Uterus (tissue), 4 donors: ENCODE measurements at regions of chr5 and their contacts with region 1.

Region 1: DNA sequence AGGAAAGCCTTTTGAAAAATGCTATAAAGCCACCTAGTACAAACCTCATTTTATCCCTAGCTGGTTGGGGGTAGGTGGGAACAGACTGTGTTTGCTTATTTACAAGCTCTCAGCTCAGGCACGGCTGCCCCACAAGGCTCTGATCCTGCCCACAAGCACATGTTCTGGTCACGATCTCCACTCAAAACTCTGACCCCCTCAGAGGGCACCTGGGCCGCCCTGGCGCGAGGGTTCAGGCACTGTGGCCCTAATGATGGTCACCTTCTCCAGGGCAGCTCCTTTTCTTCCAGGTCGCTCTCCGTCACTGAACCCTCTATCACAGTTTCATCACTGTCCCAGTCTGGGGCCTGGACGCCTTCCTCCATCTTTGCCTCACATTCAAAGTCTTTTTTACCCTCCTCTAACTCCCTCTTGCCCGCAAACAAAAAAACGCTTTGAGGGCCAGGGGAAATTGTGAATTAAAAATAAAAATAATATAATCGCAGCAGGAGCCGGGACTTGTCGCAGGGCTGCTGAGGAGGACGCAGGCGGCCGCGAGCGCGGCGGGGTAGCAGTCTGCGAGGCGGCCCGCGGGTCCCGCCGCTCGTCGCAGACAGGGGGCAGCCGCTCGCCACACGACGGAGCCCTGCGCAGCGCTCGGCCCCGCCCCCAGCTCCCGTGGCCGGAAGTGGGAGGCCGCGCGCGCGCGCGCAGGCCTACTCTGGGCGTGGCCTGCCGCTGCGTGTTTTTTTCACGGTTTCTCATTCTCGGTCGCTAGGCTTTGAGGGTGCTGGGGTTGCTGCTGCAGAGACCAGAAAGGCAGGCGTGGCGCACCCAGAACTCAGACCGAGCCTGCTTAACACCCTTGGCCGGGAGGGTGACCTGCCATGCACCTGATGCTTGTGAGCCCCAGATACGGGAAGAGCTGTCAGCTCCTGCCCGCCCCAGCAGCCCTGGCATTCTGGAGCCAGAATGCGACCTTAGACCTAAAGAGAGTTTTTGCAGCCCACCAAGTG is at the start of gene ANKRD31:
- DNase-seq: peak; percentile 80 to 86
- H3K4me3 ChIP-seq: peak within 1 kb of the TSS; percentile 55 to 66
- H3K27ac ChIP-seq: peak within 1 kb of the TSS; percentile 70 to 76
- H3K4me1 ChIP-seq: no peaks in the 10 kb centered on the region
- H3K27me3 ChIP-seq: no peaks in the 10 kb centered on the region
- CTCF ChIP-seq: peak; percentile 68 to 98 (median 94)
- POLR2A ChIP-seq: peak; percentile 54 to 67
- total RNA-seq, gene ANKRD31: 0.67 to 0.69 TPM in 2 of 4 donors, not detected in the others

Region 2: DNA sequence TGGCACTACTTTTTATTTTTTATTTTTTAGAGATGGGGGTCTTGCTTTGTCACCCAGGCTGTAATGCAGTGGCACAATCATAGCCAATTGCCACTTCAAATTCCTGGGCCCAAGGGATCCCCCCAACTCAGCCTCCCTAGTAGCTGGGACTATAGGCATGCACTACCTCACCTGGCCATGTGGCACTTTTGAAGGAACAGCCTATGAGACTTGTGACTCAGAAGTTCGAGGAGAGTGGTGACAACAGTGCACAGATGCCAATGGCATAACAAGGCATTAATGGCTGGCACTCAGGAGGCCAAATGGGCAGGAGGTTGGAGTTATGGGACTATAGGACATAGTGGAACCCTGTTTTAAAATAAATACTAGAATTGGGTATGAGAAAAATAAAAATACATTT is 33.7 kb before region 1 on chr5:
- intact Hi-C with region 1: no loop called
- DNase-seq: no peak
- H3K4me3 ChIP-seq: no peak overlapping the region
- H3K27ac ChIP-seq: no peak overlapping the region
- H3K4me1 ChIP-seq: no peaks in the 10 kb centered on the region
- H3K27me3 ChIP-seq: no peaks in the 10 kb centered on the region
- CTCF ChIP-seq: no peak
- POLR2A ChIP-seq: no peak

Region 3: DNA sequence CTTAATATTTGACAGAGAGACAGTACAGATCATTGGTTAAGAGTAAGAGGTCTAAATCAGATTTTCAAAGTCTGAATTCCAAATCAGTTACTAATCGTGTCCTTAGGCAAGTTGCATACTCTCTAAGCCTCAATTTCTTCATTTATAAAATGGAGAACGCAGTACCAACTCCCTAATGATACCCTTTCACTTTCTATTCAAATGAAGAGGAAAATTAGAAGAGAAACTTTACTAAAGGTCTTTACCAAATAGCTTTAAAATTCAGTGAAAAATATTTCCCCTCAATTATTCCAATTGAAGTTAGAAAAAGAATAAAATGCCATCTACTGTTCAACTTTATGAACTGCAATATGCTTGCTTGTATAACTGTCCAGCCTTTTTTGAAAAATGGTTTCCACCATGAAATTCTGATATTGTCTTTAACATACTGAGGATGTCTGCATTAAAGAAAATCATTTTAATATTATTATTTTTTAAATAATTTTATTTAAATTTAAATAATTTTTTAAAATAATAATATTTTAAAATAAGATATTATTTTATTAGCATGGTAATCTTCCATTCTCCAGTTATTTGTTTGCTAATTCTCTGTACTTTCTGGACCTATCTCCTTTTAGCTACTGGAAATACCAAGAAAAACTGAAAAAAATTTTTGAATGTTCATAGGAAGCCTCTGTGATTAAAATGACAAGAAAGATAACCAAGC is 444.7 kb after region 1 on chr5:
- intact Hi-C with region 1: loop called (anchors 10 kb)
- DNase-seq: no peak
- H3K4me3 ChIP-seq: no peak overlapping the region
- H3K27ac ChIP-seq: no peak overlapping the region
- H3K4me1 ChIP-seq: no peaks in the 10 kb centered on the region
- H3K27me3 ChIP-seq: no peaks in the 10 kb centered on the region
- CTCF ChIP-seq: peak; percentile 62 to 74 (median 68)
- POLR2A ChIP-seq: no peak